Esophagus muscularis mucosa (tissue), 4 donors: ENCODE measurements at regions of chr5 and their contacts with region 1.

Region 1: GRCh38 chr5:93607367-93608258 is 24.6 kb downstream of the NR2F1 start:
- DNase-seq: no peak
- H3K4me3 ChIP-seq: peak overlapping the region in 3 of 4 donors; percentile 2 to 30 (median 12)
- H3K27ac ChIP-seq: peak overlapping the region; percentile 22 to 63 (median 42)
- H3K4me1 ChIP-seq: peaks cover 16 to 33% (median 31%) of the 10 kb centered on the region in 4 donors
- H3K27me3 ChIP-seq: peaks cover 0 to 69% (median 32%) of the 10 kb centered on the region in 4 donors
- CTCF ChIP-seq: peak; percentile 38 to 51 (median 48)
- EP300 ChIP-seq: no peak
- POLR2A ChIP-seq: no peak

Region 2: DNA sequence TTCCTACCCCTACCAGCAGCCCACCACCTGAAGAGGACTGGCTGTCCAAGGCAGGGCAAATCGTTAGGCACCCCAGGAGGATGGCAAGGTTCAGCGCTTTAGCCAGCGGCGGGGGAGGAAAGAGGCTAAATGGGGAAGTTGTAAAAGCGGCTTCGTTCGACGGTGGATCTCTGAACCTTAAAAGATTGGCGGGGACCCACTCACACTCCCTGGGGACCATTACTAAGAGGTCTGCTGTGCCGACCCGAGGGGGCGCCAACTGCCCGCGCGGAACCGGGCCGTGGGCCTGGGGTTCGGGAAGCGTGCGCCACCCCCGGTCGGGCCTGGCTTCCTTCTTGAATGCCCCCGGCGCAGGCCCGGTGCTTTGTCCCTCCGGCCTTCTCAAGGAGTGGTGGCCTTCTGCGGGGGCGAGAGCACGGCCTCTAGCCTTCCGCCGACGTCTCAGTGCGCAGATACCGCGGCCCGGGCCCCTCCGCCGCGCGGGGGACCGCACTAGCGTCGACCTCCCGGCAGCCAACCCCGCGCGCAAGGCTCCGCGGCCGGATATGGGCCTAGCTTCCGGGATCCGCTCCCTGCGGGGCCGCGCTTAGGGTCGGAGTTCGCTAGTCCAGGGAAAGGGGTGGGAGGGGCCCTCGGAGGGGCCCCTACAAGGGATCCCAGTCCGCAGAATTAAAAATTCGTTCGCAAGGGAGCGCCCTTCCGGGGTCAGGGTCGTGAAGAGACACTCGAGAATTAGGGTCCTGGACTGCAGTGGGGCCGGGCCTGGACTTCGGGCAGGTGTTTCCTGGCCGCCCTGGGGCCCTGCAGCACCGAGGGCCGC is 37.1 kb before region 1 on chr5:
- intact Hi-C with region 1: no loop called
- DNase-seq: no peak
- H3K4me3 ChIP-seq: peak overlapping the region; percentile 21 to 37 (median 22)
- H3K27ac ChIP-seq: peak overlapping the region in 1 of 4 donors; percentile 37
- H3K4me1 ChIP-seq: peaks cover 14 to 66% (median 44%) of the 10 kb centered on the region in 4 donors
- H3K27me3 ChIP-seq: peaks cover 0 to 31% (median under 1%) of the 10 kb centered on the region in 4 donors
- CTCF ChIP-seq: no peak
- EP300 ChIP-seq: no peak
- POLR2A ChIP-seq: no peak

Region 3: DNA sequence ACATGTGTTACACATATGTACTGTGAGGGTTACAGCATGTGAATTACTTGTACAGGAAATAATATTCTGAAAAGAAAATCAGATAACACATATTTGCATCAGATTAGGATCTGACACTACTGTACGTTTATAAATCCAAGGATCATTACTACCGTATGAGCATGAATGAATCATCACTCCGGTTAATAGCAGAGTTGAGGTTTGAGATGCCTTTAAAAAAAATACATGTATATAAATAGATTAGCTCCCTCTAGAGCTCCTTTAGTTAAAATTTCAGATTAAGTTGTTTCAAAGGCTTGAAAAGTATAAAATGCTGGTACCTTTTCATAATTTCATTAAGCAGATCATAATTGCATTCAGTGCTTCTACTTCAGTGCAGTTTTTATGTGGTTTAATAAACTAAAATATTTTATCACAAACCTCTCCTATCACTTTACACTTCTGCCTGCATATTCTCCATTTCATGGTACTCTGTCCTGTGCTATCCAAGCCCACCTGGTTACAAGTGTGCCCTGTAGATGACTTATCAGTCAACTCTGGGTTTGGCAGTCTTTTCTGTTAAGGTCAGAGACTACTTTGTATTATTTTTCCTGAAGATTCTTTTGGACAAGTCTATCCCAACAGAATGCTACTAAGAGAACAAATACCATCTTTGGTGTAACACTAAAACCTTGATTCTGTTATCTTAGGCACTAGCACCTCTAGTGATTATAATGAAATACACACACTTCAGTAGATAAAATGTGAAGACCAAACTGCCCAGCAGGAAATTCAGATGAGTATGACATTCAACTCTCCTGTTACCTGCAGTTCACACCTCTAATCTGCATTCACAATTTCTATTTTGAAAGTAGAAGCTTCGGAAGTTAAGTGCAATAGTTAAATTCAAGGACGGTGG is 181.8 kb after region 1 on chr5:
- intact Hi-C with region 1: loop called (anchors 10 kb)
- DNase-seq: no peak
- H3K4me3 ChIP-seq: no peak overlapping the region
- H3K27ac ChIP-seq: no peak overlapping the region
- H3K4me1 ChIP-seq: peaks cover 0 to 11% (median 0%) of the 10 kb centered on the region in 4 donors
- H3K27me3 ChIP-seq: no peaks in the 10 kb centered on the region
- CTCF ChIP-seq: no peak
- EP300 ChIP-seq: no peak
- POLR2A ChIP-seq: no peak

Region 4: DNA sequence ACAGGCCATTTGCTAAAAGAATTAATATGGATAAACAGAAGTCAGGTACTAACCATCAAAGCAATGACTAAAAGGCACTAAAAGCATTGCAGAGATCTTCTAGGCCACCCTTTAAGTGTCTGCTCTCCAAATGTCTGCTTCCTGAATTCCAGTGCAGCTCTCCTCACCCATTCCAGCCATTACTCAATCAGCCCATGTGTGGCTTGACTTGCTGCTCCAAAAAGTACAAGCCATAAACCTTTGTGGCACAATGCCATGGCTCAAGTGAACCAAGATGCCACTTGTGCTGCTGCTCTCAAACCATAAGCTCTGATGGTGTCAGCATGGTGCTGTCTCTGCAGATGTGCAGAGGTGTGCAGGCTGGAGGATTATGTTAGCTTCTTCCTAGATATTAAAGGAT is 424.0 kb after region 1 on chr5:
- intact Hi-C with region 1: no loop called
- DNase-seq: no peak
- H3K4me3 ChIP-seq: no peak overlapping the region
- H3K27ac ChIP-seq: no peak overlapping the region
- H3K4me1 ChIP-seq: no peaks in the 10 kb centered on the region
- H3K27me3 ChIP-seq: no peaks in the 10 kb centered on the region
- CTCF ChIP-seq: no peak
- EP300 ChIP-seq: no peak
- POLR2A ChIP-seq: no peak